A549 (cell line): ENCODE measurements at regions of chr15 and their contacts with region 1.

Region 1: GRCh38 chr15:71448688-71449114 is 333.4 kb downstream of the THSD4 start:
- DNase-seq: peak; percentile 55 to 86
- ATAC-seq: peak; percentile 36 to 47; a peak in 3 of 6 replicates
- H3K4me3 ChIP-seq: no peak overlapping the region
- H3K27ac ChIP-seq: peak overlapping the region; percentile 85
- H3K4me1 ChIP-seq: peaks cover 67% of the 10 kb centered on the region
- CTCF ChIP-seq: peak; percentile 98
- EP300 ChIP-seq: no peak
- POLR2A ChIP-seq: no peak
- RAD21 ChIP-seq: peak; percentile 96 to 97

Region 2: DNA sequence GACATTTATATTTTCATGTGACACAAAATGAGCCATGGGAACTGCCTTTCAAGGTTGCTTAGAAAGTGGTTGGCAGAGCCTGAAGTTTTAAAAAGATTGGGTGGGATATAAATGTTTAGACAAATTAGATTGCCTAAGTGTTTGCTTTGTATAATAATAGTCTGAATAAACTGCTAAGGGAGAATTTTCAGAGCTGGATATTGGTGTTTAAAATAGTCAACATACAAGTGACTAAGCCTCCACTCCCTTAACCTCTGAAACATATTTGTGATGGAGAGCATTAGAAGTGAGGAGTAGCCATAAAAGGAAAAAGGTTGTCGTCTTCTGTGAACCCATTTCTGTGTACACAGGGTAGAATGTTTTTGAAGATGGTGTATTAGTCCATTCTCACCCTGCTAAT is 131.8 kb before region 1 on chr15:
- CTCF ChIA-PET with region 1: no interaction called
- POLR2A ChIA-PET with region 1: no interaction called
- DNase-seq: no peak
- ATAC-seq: no peak
- H3K4me3 ChIP-seq: no peak overlapping the region
- H3K27ac ChIP-seq: no peak overlapping the region
- H3K4me1 ChIP-seq: no peaks in the 10 kb centered on the region
- CTCF ChIP-seq: no peak
- EP300 ChIP-seq: no peak
- POLR2A ChIP-seq: no peak
- RAD21 ChIP-seq: no peak

Region 3: DNA sequence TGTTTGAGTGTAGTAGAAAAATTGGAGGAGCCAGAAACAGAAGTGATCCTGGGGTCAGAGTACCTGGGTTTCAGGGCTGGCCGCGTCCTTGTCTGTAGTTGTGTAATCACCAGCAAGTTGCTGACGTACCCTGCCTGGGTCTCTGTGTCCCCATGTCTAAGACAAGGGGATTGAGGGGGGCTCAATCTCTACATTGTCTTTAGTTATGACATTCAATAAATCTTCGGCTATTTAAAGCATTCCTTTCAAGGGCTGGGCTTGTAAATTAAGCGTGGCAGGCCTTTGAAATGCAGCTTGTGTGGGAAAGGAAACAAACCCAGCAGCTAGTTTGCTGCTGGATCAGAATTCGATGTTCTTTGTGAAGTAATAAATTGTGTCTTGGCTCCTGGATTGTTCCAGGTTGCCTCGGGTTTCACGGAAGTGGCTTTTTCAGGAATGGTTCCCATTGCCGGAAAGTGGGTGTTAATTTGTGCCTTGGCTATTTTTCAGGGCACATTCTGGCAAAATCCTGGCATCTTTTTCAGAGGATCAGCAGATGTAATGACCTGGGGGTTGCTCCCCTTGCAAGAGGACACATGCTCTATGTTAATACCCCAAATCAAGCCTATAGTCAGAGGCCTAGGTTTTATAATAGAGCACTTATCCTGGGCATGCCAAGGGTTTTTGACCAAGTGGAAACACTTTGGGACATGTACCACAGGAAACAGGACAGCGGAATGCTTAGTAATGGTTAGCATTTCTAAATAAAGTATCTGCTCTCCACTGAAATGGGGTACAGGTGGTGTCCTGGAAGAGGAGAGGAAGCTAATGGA is 66.9 kb after region 1 on chr15:
- CTCF ChIA-PET with region 1: no interaction called
- POLR2A ChIA-PET with region 1: no interaction called
- DNase-seq: peak in 1 of 2 experiments; percentile 25
- ATAC-seq: no peak
- H3K4me3 ChIP-seq: no peak overlapping the region
- H3K27ac ChIP-seq: no peak overlapping the region
- H3K4me1 ChIP-seq: peaks cover 16% of the 10 kb centered on the region
- CTCF ChIP-seq: no peak
- EP300 ChIP-seq: no peak
- POLR2A ChIP-seq: no peak
- RAD21 ChIP-seq: no peak

Region 4: DNA sequence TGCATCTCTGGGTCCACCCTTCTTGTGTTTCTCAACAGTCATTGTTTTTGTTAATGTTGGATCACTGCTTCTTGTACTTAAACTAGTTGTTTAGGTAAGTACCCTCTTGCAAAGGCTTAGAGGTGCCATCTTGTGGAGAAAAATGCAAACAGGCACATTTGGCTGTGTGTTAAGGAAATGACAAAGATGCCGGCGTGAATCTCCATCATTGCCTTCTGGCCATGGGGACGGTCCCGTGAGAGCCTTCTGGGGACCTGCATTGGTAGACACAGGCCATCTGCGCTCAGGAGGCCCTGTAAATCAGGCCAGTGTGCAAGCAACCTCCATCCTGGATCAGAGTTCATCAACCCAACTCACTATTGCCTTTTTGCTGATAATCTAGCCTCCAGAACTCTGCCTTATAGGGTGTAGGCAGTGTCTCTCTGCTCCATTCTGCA is 203.1 kb after region 1 on chr15:
- CTCF ChIA-PET with region 1: interaction called, 15 read pairs
- POLR2A ChIA-PET with region 1: no interaction called
- DNase-seq: peak; percentile 51 to 86
- ATAC-seq: peak; percentile 72 to 94
- H3K4me3 ChIP-seq: no peak overlapping the region
- H3K27ac ChIP-seq: peak overlapping the region; percentile 22 to 69
- H3K4me1 ChIP-seq: peaks cover 8% of the 10 kb centered on the region; the same call in 2 of the 3 replicates
- CTCF ChIP-seq: peak; percentile 87
- EP300 ChIP-seq: no peak
- POLR2A ChIP-seq: no peak
- RAD21 ChIP-seq: peak; percentile 89 to 91

Region 5: DNA sequence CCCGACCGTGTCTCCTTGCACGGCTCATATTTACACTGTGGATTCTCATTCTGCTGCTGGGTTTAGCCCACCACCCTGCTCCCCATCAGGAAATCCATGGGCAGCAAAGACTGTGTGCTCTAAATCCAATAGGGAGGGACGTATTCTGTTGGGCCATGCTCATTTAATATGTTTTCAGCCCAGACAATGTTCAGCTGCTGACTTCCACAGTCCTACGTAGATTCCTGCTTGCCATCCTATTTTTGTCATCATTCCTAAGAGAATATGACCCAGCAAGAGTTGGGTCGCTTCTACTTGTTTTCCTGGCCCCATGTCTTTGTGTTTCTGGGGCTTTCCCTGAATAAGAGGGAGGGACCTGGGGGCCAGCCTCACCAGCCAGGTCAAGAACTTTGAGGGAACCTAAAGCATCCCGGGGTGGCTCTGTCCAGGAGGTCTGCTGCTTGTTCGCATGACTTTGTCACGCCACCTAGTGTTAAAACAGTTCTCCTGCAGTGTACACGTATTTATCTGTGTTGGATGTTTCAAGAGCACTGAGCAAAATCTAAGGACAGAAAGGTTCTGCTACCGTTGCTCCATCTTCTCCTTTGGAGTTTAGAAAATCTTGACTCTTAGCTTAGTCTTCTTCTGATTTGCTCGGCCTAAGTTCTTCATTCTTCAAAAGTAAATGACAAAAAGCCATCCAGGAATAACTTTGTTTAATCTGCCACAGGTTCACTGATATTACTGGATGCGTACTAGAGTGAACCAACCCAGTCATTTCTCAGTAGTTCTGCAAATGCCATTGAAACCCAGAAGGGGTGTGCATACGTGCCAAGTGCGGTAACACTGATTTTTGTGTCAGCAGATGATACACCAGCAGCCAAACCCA is 281.8 kb after region 1 on chr15:
- CTCF ChIA-PET with region 1: interaction called, 14 read pairs
- POLR2A ChIA-PET with region 1: no interaction called
- DNase-seq: peak; percentile 85 to 88
- ATAC-seq: peak; percentile 88 to 98
- H3K4me3 ChIP-seq: no peak overlapping the region
- H3K27ac ChIP-seq: no peak overlapping the region
- H3K4me1 ChIP-seq: peaks cover 4% of the 10 kb centered on the region; the same call in 2 of the 3 replicates
- CTCF ChIP-seq: peak; percentile 91
- EP300 ChIP-seq: no peak
- POLR2A ChIP-seq: no peak
- RAD21 ChIP-seq: peak; percentile 80 to 81